ENCODE measurements at regions of chr6 and their contacts with region 1.

Region 1: DNA sequence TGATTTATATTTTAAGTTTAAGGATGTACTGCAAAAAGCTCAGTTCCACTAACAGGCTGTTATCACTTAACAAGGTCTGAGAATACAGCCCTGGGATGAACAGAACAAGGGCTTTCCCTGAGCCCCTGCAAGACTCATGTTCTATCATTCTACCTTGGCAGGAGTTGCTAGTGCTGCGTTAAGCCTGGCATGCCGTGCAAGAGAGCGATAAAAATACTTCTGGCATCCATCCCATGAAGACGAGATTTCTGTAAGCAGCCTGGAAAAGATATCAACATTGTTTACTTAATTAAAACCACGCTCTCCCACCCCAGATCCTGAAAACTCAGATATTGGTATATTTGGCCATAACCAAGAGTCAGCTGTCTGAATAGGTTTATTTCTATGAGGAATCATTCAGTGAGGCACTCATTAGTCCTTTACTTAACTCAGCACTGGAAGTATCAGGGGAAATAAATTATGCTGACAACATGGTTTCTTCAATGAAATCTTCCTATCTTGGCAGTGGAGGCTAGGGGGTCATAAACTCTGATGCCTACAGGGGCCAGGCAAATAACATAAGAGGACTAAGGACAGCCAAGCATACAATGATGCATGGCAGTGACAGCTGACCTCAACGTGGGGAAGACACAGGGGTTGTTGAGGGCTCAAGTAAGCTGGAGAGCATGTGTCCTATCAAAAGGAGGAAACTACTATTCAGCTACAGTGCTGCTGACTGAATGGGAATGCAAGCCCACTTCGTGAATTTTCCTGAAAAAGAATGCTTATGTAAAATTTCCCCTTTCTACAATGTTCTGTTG is 37.6 kb upstream of the LYRM2 start:
- DNase-seq: no peak
- H3K4me3 ChIP-seq: no peak overlapping the region
- H3K27ac ChIP-seq: no peak overlapping the region
- H3K4me1 ChIP-seq: no peaks in the 10 kb centered on the region
- H3K27me3 ChIP-seq: no peaks in the 10 kb centered on the region
- CTCF ChIP-seq: no peak
- EP300 ChIP-seq: no peak
- POLR2A ChIP-seq: no peak

Region 2: GRCh38 chr6:89655122-89655521 is 21.0 kb before region 1 on chr6:
- in situ Hi-C with region 1: no loop called
- intact Hi-C with region 1: loop called (anchors 1 kb)
- DNase-seq: no peak
- H3K4me3 ChIP-seq: no peak overlapping the region
- H3K27ac ChIP-seq: no peak overlapping the region
- H3K4me1 ChIP-seq: no peaks in the 10 kb centered on the region
- H3K27me3 ChIP-seq: no peaks in the 10 kb centered on the region
- CTCF ChIP-seq: no peak
- EP300 ChIP-seq: no peak
- POLR2A ChIP-seq: no peak